ENCODE measurements at regions of chr17 and their contacts with region 1.

Region 1: GRCh38 chr17:56939901-56940343 is 20.9 kb downstream of the COIL start:
- DNase-seq: peak; percentile 84
- H3K4me3 ChIP-seq: no peak overlapping the region
- H3K27ac ChIP-seq: no peak overlapping the region
- H3K4me1 ChIP-seq: no peaks in the 10 kb centered on the region
- H3K27me3 ChIP-seq: no peaks in the 10 kb centered on the region
- CTCF ChIP-seq: peak; percentile 67

Region 2: GRCh38 chr17:56819431-56820145 is 120.3 kb before region 1 on chr17:
- CTCF ChIA-PET with region 1: interaction called, 7 read pairs
- POLR2A ChIA-PET with region 1: no interaction called
- intact Hi-C with region 1: loop called (anchors 1 kb)
- DNase-seq: peak; percentile 80
- H3K4me3 ChIP-seq: no peak overlapping the region
- H3K27ac ChIP-seq: no peak overlapping the region
- H3K4me1 ChIP-seq: no peaks in the 10 kb centered on the region
- H3K27me3 ChIP-seq: no peaks in the 10 kb centered on the region
- CTCF ChIP-seq: peak; percentile 86